ENCODE measurements at regions of chr17 and their contacts with region 1.

Region 1: GRCh38 chr17:42609182-42609813 is at the starts of genes RETREG3 and TUBG1:
- DNase-seq: peak; percentile 99

Region 2: GRCh38 chr17:42586514-42587230 is 22.6 kb before region 1 on chr17:
- CTCF ChIA-PET with region 1: interaction called, 4 read pairs
- POLR2A ChIA-PET with region 1: interaction called, 12 read pairs
- DNase-seq: no peak

Region 3: DNA sequence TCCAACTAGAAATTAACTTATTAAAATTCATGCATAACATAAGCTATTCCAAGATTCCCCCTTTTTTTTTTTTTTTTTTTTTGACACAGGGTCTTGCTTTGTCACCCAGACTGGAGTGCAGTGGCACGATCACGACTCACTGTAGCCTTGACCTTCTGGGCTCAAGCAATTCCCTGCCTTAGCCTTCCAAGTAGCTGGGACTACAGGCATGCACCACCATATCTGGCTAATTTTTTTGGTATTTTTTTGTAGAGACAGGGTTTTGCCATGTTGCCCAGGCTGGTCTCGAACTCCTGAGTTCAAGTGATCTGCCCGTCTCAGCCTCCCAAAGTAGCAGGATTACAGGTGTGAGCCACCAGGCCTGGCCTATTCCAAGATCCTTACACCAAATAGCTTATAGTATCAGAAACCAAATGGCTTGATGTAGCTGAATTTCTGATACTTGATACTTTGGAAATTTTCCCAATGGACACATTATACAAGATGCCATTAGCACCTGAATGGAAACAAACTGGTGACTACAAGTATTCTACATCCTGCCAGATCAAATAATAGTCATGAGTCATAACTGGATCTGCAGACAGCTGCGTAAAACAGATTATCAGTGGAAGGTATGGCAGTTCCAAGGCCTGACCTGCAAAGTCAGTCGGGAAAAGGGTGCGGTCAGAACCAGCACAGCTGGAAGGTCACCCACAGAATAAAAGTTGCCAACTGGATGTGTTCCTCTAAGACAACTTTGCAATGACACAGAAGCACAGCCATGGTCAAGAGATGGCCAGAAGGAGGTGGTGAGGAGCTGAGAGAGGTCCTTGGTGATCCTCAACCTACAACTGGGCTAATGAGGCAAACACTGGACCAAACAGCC is 14.7 kb after region 1 on chr17:
- CTCF ChIA-PET with region 1: no interaction called
- POLR2A ChIA-PET with region 1: interaction called, 42 read pairs
- DNase-seq: no peak

Region 4: DNA sequence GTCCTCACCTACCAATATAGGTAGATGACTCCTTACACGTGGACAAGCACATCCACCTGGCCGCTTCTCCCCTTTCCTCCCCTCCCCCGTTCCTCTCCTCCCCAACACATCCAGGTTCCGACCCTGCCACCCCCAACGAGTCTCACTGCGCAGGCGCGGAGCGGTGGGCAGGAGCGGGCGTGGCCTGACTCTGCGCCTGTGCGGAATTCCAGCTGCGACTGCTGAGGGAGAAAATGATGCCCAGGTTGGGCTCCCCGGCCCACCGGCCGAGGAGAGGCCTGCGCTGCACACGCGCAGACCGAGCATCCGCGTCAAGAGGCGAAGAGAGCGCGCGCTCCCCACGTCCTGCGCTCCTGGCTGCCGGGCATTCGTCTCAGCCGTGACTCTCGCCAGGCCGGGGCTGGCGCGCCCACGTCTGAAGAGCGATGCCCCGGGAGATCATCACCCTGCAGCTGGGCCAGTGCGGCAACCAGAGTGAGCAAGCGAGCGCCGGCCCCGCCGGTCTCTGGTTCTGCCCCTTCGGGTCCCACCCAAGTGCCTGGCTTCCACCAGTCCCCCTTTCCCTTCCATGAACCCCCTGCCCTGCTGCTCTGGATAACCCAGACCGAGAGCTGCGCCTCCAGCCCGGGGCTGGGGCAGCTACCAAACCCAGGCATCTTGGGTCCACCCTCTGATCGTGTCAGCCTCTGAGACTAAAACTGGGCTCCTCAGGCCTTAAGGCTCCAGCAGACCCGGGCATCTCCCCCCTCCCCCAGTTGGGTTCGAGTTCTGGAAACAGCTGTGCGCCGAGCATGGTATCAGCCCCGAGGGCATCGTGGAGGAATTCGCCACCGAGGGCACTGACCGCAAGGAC is 50.0 kb after region 1 on chr17 and contains the start of gene TUBG2:
- CTCF ChIA-PET with region 1: no interaction called
- POLR2A ChIA-PET with region 1: interaction called, 19 read pairs
- DNase-seq: peak; percentile 87

Measured in HEK293T (cell line).